ENCODE measurements at regions of chr2 and their contacts with region 1.

Region 1: GRCh38 chr2:201451292-201452057 is at the starts of genes STRADB and TRAK2:
- DNase-seq: peak; percentile 89
- ATAC-seq: peak; percentile 93
- H3K4me3 Mint-ChIP-seq: peak within 1 kb of the TSS; percentile 97
- H3K27ac Mint-ChIP-seq: peak within 1 kb of the TSS; percentile 95
- H3K4me1 Mint-ChIP-seq: peaks cover 51% of the 10 kb centered on the region
- H3K27me3 Mint-ChIP-seq: no peaks in the 10 kb centered on the region
- CTCF ChIP-seq: no peak
- total RNA-seq, gene STRADB: 17.8 and 23.3 TPM in 2 replicates
- total RNA-seq, gene TRAK2: 17.7 and 20.1 TPM in 2 replicates

Region 2: DNA sequence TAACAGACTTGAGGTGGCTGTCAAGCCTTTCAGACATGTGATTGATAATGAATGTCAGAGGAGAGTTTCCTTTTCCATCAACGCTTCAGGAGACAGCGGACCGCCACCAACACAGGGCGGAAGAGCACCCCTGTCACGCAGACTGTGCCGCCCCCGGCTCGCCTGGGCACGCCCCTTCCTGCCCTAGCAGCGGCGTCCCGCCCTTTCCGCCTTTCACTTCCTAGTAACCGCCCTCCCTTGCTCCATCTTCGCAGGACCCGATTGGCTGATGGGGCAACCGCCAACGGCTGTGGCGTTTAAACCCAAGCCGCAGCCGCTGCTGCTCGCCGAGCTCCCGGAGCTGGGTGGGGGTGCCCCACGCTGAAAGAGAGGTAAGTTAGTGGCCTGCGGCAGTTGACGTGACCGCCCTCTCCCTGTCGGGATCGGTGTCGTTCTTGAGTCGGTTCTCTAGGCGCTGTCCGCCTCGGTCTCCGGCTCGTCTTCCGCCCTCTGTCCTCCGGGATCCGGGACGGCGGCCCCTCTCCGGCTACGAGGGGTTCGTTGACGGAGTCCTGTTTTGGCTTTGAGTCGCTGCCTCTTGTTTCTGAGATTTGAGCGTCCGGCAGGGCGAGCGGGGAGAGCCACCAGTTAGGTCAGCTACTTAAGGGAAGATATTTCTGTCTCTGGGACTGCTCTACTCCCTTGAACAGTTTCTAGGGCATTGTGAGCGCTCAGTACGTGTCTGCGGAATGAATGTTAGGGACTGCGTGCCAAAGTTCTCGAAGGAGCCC is 925.4 kb before region 1 on chr2 and contains the start of gene SGO2:
- CTCF ChIA-PET with region 1: no interaction called
- POLR2A ChIA-PET with region 1: interaction called, 5 read pairs
- intact Hi-C with region 1: loop called (anchors 5 kb)
- DNase-seq: peak; percentile 90
- ATAC-seq: peak; percentile 100
- H3K4me3 Mint-ChIP-seq: peak within 1 kb of the TSS; percentile 95
- H3K27ac Mint-ChIP-seq: peak within 1 kb of the TSS; percentile 80
- H3K4me1 Mint-ChIP-seq: peaks cover 14% of the 10 kb centered on the region
- H3K27me3 Mint-ChIP-seq: peaks cover 5% of the 10 kb centered on the region
- CTCF ChIP-seq: no peak
- total RNA-seq, gene SGO2: 3.3 and 3.8 TPM in 2 replicates

Region 3: DNA sequence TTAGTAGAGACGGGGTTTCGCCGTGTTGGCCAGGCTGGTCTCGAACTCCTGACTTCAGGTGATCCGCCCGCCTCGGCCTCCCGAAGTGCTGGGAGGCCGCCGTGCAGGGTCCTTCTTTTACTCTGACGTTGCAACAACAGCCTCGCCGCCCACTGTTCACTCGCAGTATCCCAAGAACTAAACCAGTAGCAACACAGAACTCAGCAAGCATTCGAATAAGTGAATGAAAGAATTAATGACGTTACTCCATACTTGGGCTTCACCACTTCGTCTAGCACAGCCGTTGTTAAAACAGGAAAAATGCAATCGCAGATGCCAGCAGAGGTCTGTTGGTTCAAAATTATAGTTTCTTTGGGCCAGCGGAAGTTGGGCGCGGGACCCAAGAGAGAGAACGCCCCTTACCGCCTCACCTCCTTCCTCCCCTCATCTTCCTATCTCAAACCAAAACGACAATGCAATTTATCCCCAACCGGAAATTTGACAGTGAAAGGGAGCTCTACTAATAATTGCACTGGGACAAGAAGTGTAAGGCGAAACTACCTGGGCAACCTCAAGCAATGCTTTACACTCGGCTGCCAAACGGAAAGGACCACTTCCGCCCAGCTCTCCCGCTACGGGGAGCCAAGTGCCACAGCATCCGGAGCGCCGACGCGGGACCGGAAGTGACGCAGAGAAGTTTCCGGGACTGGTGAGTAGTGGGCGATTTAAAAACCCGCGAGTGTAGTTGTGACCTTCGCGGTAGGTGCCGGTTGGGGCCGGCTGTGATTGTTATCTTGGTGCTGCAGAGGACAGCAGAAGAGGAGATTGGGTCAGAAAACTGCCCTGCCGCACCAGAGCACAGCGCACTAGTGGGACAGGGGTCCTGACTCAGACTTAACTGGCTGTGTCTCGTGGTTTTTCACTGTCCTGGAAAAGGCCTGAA is 562.5 kb before region 1 on chr2 and contains the starts of genes NIF3L1 and PPIL3:
- CTCF ChIA-PET with region 1: no interaction called
- POLR2A ChIA-PET with region 1: interaction called, 3 read pairs
- intact Hi-C with region 1: loop called (anchors 1 kb)
- DNase-seq: peak; percentile 90
- ATAC-seq: peak; percentile 80
- H3K4me3 Mint-ChIP-seq: peak within 1 kb of the TSS; percentile 99
- H3K27ac Mint-ChIP-seq: peak within 1 kb of the TSS; percentile 100
- H3K4me1 Mint-ChIP-seq: peaks cover 40% of the 10 kb centered on the region
- H3K27me3 Mint-ChIP-seq: no peaks in the 10 kb centered on the region
- CTCF ChIP-seq: no peak
- total RNA-seq, gene NIF3L1: 32.2 and 32.3 TPM in 2 replicates
- total RNA-seq, gene PPIL3: 43.5 and 52.5 TPM in 2 replicates

Region 4: GRCh38 chr2:201242571-201243277 is 208.8 kb before region 1 on chr2:
- CTCF ChIA-PET with region 1: no interaction called
- POLR2A ChIA-PET with region 1: no interaction called
- intact Hi-C with region 1: no loop called
- DNase-seq: no peak
- ATAC-seq: no peak
- H3K4me3 Mint-ChIP-seq: no peak overlapping the region
- H3K27ac Mint-ChIP-seq: peak overlapping the region; percentile 54
- H3K4me1 Mint-ChIP-seq: peaks cover 74% of the 10 kb centered on the region
- H3K27me3 Mint-ChIP-seq: no peaks in the 10 kb centered on the region
- CTCF ChIP-seq: no peak

Region 5: DNA sequence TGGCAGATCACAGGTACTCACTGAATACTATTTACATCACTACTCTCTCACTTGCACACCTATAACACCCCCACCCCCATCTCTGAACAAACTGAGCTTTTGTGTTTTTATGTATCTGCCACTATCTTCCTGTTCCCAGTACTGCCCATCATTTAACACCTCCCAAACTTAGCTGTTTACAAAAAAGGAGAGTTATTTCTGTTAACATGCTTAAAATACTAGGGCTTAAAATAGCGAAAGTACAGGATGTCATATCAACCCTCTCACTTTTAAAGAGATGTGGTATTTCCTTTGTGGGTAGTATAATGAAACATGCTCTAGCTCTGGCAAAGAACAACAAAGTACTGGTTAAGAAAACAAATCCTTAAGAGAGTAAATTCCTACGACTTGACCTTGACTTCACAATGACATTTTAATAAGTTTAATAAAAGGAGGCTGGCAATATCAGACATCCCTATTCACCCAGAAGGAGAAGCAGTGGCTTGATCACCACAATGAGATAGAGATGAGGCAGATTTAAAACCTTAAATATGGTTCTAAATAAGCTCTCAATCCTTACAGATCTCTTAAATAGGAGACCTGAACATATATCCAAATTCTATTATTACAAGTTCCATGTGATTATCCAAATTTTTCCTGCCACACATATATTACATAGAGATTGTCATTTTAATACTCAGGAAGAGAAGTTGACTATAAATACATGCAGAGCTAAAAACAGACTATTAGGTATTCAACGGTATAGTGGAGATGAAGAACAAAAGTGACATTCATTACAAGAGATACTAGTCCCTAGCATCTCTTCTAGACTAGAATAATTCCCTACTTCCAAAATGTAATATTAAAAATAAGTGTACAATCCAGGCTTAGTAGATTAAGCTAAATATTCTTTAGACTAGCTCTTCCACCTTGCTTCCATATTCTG is 37.1 kb before region 1 on chr2:
- CTCF ChIA-PET with region 1: no interaction called
- POLR2A ChIA-PET with region 1: interaction called, 13 read pairs
- intact Hi-C with region 1: loop called (anchors 2 kb)
- DNase-seq: no peak
- ATAC-seq: peak; percentile 49
- H3K4me3 Mint-ChIP-seq: no peak overlapping the region
- H3K27ac Mint-ChIP-seq: no peak overlapping the region
- H3K4me1 Mint-ChIP-seq: peaks cover 27% of the 10 kb centered on the region
- H3K27me3 Mint-ChIP-seq: no peaks in the 10 kb centered on the region
- CTCF ChIP-seq: no peak

Region 6: GRCh38 chr2:201425952-201426351 is 25.5 kb before region 1 on chr2:
- CTCF ChIA-PET with region 1: no interaction called
- POLR2A ChIA-PET with region 1: no interaction called
- intact Hi-C with region 1: no loop called
- DNase-seq: no peak
- ATAC-seq: no peak
- H3K4me3 Mint-ChIP-seq: no peak overlapping the region
- H3K27ac Mint-ChIP-seq: no peak overlapping the region
- H3K4me1 Mint-ChIP-seq: peaks cover 41% of the 10 kb centered on the region
- H3K27me3 Mint-ChIP-seq: no peaks in the 10 kb centered on the region
- CTCF ChIP-seq: no peak

Region 7: DNA sequence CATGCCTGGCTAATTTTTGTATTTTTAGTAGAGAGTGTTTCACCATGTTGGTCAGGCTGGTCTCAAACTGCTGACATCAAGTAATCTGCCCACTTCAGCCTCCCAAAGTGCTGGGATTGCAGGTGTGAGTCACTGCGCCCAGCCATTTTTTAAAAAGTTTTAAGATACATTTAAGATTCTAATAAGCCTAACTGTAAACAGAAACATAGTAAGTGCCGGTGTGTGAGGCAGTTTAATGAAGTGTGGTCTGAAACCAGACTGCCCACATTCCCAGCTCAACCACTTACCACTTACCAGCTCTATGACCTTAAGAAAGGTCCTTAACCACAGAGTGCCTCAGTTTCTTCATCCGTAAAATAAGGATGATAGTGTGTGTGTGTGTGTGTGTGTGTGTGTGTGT is 149.4 kb after region 1 on chr2:
- CTCF ChIA-PET with region 1: no interaction called
- POLR2A ChIA-PET with region 1: no interaction called
- intact Hi-C with region 1: no loop called
- DNase-seq: no peak
- ATAC-seq: no peak
- H3K4me3 Mint-ChIP-seq: no peak overlapping the region
- H3K27ac Mint-ChIP-seq: no peak overlapping the region
- H3K4me1 Mint-ChIP-seq: no peaks in the 10 kb centered on the region
- H3K27me3 Mint-ChIP-seq: peaks cover 34% of the 10 kb centered on the region
- CTCF ChIP-seq: no peak

Region 8: DNA sequence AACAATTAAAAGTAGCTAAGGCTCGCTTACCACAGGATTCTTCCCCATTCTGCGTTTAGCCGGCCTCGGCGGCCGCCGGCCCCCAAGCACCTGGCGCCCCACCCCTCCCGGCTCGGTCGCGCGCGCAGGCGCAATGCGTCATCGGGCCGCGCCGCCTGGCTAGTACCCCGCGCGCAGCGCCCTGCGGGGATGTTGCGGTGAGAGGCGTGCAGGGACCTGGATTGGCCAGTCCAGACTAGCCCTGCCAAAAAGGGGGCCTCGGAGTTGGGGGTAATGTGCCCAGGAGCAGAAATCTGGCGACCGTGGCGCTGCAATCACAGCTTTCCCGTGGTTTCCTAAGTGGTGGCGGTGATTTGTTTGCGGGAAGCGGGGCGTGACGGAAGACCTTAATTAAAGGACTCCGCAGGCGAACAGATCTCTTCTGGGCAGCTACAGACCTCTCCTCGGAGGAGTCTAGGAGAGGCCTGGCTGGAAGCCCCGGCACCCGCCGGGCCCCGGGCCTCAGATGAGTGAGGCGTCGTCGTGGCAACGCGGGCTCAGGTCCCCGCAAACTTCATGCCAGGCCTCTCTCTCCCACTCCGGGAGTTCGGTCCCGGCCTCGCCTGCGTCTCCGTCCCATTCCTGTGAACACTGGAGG is 191.2 kb after region 1 on chr2:
- CTCF ChIA-PET with region 1: interaction called, 6 read pairs
- POLR2A ChIA-PET with region 1: interaction called, 13 read pairs
- intact Hi-C with region 1: loop called (anchors 1 kb)
- DNase-seq: peak; percentile 91
- ATAC-seq: peak; percentile 86
- H3K4me3 Mint-ChIP-seq: peak overlapping the region; percentile 95
- H3K27ac Mint-ChIP-seq: peak overlapping the region; percentile 91
- H3K4me1 Mint-ChIP-seq: peaks cover 9% of the 10 kb centered on the region
- H3K27me3 Mint-ChIP-seq: no peaks in the 10 kb centered on the region
- CTCF ChIP-seq: no peak

Region 9: GRCh38 chr2:202375609-202376408 is 924.3 kb after region 1 on chr2 and contains the start of gene BMPR2:
- CTCF ChIA-PET with region 1: no interaction called
- POLR2A ChIA-PET with region 1: no interaction called
- intact Hi-C with region 1: loop called (anchors 5 kb)
- DNase-seq: peak; percentile 88
- ATAC-seq: peak; percentile 79
- H3K4me3 Mint-ChIP-seq: peak within 1 kb of the TSS; percentile 98
- H3K27ac Mint-ChIP-seq: peak within 1 kb of the TSS; percentile 87
- H3K4me1 Mint-ChIP-seq: peaks cover 24% of the 10 kb centered on the region
- H3K27me3 Mint-ChIP-seq: no peaks in the 10 kb centered on the region
- CTCF ChIP-seq: no peak
- total RNA-seq, gene BMPR2: 16.5 and 16.8 TPM in 2 replicates